ENCODE measurements at regions of chr3 and their contacts with region 1.

Region 1: DNA sequence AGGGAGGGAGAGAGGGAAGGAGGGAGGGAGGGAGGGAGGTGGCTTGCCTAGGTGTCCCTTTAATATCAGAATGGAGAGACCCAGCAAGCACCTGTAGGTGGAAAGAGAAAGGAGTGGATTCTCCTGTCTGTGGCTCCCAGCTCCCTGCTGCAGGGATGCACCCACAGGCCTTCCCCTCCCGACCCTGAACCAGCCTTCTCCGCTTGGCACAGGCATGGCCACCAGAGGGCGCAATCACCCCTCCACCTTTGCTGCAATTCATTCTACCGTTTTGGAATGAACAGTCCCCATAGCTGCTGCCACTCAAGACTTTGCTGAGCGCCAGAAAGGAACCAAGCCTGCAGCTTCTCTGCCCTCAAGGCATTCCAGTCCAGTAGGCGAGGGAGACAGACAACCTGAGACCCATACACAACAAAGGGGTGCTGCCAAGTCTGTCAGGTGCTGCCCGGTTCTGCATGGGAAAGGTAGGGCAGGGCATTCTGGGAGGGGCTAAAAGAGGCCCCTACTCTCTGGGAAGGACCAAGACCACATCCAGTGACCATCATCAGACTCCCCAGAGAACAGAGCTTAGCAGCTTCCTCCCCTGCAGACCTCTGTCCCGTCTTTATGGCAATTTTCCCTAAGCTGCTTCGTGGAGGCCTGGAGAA is 4.9 kb downstream of the TLR9 start:
- DNase-seq: peak; percentile 97
- H3K4me3 Mint-ChIP-seq: no peak overlapping the region
- H3K27ac Mint-ChIP-seq: no peak overlapping the region
- H3K4me1 Mint-ChIP-seq: peaks cover 82% of the 10 kb centered on the region
- H3K27me3 Mint-ChIP-seq: no peaks in the 10 kb centered on the region

Region 2: GRCh38 chr3:52001443-52001974 is 219.0 kb before region 1 on chr3:
- CTCF ChIA-PET with region 1: interaction called, 8 read pairs
- intact Hi-C with region 1: loop called (anchors 5 kb)
- DNase-seq: peak; percentile 87
- H3K4me3 Mint-ChIP-seq: no peak overlapping the region
- H3K27ac Mint-ChIP-seq: no peak overlapping the region
- H3K4me1 Mint-ChIP-seq: peaks cover 9% of the 10 kb centered on the region
- H3K27me3 Mint-ChIP-seq: no peaks in the 10 kb centered on the region

Region 3: GRCh38 chr3:52197842-52198668 is 22.4 kb before region 1 on chr3 and contains the start of gene ALAS1:
- CTCF ChIA-PET with region 1: interaction called, 14 read pairs
- intact Hi-C with region 1: loop called (anchors 1 kb)
- DNase-seq: peak; percentile 94
- H3K4me3 Mint-ChIP-seq: peak within 1 kb of the TSS; percentile 92
- H3K27ac Mint-ChIP-seq: peak within 1 kb of the TSS; percentile 84
- H3K4me1 Mint-ChIP-seq: peaks cover 56% of the 10 kb centered on the region
- H3K27me3 Mint-ChIP-seq: no peaks in the 10 kb centered on the region
- total RNA-seq, gene ALAS1: 35.7 to 37.8 TPM

Region 4: DNA sequence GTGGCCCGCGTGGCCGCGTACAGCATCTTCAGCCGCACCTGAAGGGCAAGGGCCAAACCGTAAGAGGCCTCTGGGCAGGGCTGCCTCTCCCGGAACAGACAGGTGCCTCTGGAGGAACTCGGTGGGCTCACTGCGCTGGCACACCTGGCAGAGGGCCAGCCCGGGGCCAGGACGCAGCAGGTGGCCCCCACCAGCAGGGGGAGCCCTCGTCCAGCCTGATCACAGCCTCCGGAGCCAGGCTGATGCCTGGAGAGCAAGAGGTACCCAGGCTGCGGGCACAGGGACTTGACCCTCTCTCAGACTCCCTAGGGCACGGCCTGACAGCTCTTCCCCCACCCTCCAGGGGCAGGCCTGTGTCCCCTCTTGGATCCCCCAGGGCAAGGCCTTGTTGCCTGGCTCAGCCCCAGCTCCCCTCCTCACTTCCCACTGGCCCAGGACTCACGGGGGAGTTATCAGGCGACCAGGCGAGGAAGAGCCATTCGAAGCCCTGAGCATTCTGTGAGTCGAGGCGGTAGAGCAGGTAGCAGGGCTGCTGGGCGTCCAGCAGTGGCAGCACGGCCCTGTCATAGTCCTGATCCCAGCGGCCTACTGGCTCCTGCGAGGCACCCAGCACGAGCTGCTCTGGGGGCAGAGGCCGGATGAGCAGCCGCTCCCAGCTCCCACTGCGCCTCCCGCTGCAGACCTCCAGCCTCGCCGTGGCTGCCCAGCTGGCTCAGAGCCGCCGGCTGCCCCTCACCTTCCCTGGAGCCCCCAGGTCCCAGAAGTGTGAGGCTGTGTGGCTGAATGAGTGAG is 11.2 kb after region 1 on chr3:
- CTCF ChIA-PET with region 1: interaction called, 76 read pairs
- intact Hi-C with region 1: no loop called
- DNase-seq: peak; percentile 89
- H3K4me3 Mint-ChIP-seq: no peak overlapping the region
- H3K27ac Mint-ChIP-seq: peak overlapping the region; percentile 88
- H3K4me1 Mint-ChIP-seq: peaks cover 45% of the 10 kb centered on the region
- H3K27me3 Mint-ChIP-seq: no peaks in the 10 kb centered on the region

Region 5: GRCh38 chr3:52291508-52292181 is 71.1 kb after region 1 on chr3:
- CTCF ChIA-PET with region 1: interaction called, 11 read pairs
- intact Hi-C with region 1: no loop called
- DNase-seq: peak; percentile 51
- H3K4me3 Mint-ChIP-seq: no peak overlapping the region
- H3K27ac Mint-ChIP-seq: no peak overlapping the region
- H3K4me1 Mint-ChIP-seq: peaks cover 24% of the 10 kb centered on the region
- H3K27me3 Mint-ChIP-seq: no peaks in the 10 kb centered on the region

Region 6: DNA sequence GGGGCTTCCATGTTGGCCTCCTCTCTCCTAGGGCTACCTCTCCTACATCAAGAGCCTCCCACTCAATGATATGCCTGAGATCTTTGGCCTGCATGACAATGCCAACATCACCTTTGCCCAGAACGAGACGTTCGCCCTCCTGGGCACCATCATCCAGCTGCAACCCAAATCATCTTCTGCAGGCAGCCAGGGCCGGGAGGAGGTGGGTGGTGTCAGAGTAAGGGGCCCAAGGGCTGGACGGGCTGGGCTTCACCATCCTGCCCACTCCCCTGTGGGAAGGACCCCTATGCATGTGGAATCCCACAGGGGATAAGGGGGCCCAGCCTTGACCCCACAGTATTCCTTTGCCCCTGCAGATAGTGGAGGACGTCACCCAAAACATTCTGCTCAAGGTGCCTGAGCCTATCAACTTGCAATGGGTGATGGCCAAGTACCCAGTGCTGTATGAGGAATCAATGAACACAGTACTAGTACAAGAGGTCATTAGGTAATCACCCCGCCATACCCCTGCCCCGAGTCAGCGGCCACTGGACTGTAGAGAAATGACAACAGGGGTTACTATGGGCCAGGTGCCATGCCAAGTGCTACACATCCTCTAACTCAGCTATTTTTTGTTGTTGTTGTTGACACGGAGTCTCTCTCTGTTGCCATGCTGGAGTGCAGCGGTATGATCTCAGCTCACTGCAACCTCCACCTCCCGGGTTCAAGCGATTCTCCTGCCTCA is 177.3 kb after region 1 on chr3:
- CTCF ChIA-PET with region 1: no interaction called
- intact Hi-C with region 1: no loop called
- DNase-seq: no peak
- H3K4me3 Mint-ChIP-seq: no peak overlapping the region
- H3K27ac Mint-ChIP-seq: no peak overlapping the region
- H3K4me1 Mint-ChIP-seq: no peaks in the 10 kb centered on the region
- H3K27me3 Mint-ChIP-seq: no peaks in the 10 kb centered on the region

Region 7: DNA sequence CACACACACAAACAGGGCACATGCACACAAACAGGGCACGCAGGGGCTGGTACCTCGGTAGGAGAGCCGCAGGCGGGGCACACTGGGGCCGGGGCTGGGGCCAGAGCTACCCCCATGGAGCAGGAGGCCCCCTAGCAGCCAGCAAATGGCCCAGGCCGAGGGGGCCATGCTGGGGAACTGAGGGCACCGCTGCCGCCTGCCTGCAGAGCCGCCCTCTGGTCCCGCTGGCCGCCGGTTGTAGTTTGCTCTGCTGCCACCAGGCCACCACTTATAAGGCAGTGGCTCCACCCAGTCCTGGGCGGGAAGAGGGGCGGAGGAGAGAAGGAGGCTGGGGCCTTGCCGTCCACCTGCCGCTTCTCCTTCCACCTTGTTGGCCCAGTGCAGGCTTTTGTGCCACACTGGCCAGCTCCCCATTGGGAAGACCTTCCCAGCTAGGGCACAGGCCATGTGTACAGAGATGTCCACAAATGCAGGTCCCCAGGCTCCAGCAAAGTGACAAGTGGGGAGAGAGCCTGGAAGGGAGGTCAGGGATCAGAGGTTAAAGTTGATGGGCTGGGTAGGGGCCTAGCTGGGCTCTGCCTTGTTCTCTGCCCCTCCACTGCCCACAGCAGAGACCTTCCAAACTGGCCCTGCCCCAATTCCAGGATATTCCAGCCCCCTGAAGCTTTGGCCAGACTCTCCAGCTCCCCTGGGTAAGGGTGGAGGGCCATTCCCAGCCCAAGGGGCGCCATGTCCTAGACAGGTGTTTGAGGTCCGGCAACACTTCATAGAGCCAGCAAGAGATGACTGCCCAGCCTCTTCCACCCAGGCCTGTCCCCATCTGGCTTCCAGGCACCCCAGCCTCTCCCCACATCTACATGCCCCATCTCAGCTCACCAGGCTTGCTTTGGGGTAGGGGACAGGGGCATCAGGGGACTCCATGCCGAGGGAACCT is 224.6 kb after region 1 on chr3 and contains the start of gene SEMA3G:
- CTCF ChIA-PET with region 1: interaction called, 4 read pairs
- intact Hi-C with region 1: loop called (anchors 2 kb)
- DNase-seq: peak; percentile 80
- H3K4me3 Mint-ChIP-seq: no peak within 1 kb of the TSS
- H3K27ac Mint-ChIP-seq: no peak within 1 kb of the TSS
- H3K4me1 Mint-ChIP-seq: peaks cover 4% of the 10 kb centered on the region
- H3K27me3 Mint-ChIP-seq: no peaks in the 10 kb centered on the region
- total RNA-seq, gene SEMA3G: not detected

Region 8: DNA sequence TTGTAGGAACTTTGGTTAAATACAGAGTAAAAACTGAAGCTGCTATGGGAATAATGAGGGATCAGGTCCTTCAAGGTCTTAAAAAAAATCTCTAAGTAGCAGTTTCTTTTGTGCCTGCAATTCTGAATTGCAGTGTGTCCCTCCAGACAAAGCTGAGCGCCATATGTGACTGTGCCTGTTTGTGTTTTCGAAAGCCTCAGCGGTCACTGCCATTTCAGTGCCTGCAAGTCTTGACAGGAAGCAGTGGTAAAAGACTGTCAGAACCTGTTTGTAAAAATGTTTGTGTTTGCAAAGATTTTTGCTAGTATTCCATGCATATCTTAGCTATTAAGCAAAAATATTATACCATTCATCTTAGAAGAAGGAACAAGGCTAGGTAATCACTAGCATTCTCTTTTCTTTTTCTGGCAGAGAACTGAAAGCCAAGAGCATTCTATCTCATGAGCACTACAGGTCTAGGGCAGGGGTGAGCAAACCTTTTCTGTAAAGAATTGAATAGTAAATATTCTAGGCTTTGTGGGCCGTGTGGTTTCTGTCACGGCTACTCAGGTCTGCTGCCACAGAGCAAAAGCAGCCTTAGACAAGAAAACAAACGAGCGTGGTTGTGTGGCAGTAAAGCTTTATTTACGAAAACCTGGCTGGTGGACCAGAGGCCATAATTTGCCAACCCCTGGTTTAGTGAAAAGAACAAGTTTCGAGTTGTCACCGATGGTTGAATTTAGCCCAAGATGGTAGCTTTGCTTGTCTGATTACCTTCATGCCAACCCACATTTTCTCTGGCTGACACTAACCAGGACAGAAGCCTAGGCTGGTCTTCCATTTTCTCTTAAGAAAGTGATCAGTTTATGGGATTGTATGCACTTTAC is 1408.3 kb after region 1 on chr3:
- CTCF ChIA-PET with region 1: no interaction called
- intact Hi-C with region 1: no loop called
- DNase-seq: no peak
- H3K4me3 Mint-ChIP-seq: no peak overlapping the region
- H3K27ac Mint-ChIP-seq: no peak overlapping the region
- H3K4me1 Mint-ChIP-seq: no peaks in the 10 kb centered on the region
- H3K27me3 Mint-ChIP-seq: peaks cover 10% of the 10 kb centered on the region